IMR-90 (cell line): ENCODE measurements at regions of chr5 and their contacts with region 1.

Region 1: GRCh38 chr5:17248999-17249634 is 31.7 kb downstream of the BASP1 start:
- DNase-seq: peak; percentile 99
- ATAC-seq: peak; percentile 83
- H3K4me3 ChIP-seq: no peak overlapping the region
- H3K27ac ChIP-seq: peak overlapping the region; percentile 73
- H3K4me1 ChIP-seq: peaks cover 16% of the 10 kb centered on the region
- H3K27me3 ChIP-seq: no peaks in the 10 kb centered on the region
- CTCF ChIP-seq: no peak
- POLR2A ChIP-seq: no peak
- RAD21 ChIP-seq: peak; percentile 13; the same call in 1 of the 2 replicates

Region 2: GRCh38 chr5:17238521-17239041 is 10.5 kb before region 1 on chr5:
- CTCF ChIA-PET with region 1: no interaction called
- POLR2A ChIA-PET with region 1: no interaction called
- dilution Hi-C with region 1: no loop called
- in situ Hi-C with region 1: no loop called
- intact Hi-C with region 1: loop called (anchors 1 kb)
- DNase-seq: peak; percentile 82
- ATAC-seq: peak; percentile 44
- H3K4me3 ChIP-seq: no peak overlapping the region
- H3K27ac ChIP-seq: peak overlapping the region; percentile 44
- H3K4me1 ChIP-seq: peaks cover 24% of the 10 kb centered on the region
- H3K27me3 ChIP-seq: no peaks in the 10 kb centered on the region
- CTCF ChIP-seq: no peak
- POLR2A ChIP-seq: no peak
- RAD21 ChIP-seq: no peak